K562 (cell line): ENCODE measurements at regions of chr20 and their contacts with region 1.

Region 1: DNA sequence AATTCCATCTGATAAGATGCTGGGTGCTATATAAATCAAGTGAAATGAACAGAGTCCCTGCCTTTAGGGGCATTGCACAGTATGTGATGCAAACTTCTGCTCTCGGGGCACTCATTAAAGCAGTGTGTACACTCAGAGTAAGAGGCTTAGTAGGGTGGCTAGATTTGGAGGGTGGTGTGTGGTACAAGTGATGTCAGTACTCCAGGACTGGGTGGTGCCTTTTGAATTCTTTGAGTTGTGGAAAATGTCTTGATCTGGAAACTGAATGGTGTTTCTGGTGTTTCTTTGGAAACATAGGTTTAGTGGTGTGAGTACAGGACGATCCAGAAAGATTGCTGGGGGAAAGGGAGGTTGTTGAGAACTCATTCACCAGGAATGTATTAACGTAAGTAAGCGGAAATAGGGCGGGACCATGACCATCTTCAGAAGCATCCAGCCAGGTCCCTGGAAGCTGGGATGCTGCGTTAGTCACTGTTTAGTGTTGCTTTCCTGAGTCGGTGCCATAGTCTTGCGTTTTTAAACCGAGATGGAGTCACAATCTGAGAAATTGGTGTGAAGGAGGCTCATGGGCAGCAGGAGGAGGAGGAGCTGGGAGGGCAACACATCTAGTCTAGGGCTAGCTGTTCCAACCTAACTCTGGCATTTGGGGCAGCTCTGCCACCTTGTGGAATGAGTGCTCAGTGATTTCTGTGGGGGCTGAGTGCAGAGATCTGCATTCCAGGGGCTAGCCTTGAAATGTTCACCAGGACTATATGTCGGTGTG is 70.3 kb downstream of the SCAND1 start:
- DNase-seq: peak in 3 of 4 experiments; percentile 31 to 64 (median 62)
- ATAC-seq: peak; percentile 94
- H3K4me3 ChIP-seq: no peak overlapping the region
- H3K27ac ChIP-seq: no peak overlapping the region
- H3K4me1 ChIP-seq: peaks cover 2 to 7% of the 10 kb centered on the region in 2 experiments; a peak in 4 of 5 replicates
- H3K27me3 ChIP-seq: no peaks in the 10 kb centered on the region
- CTCF ChIP-seq: peak; percentile 63 to 78 (median 72)
- EP300 ChIP-seq: no peak
- POLR2A ChIP-seq: no peak
- RAD21 ChIP-seq: peak; percentile 68 to 86

Region 2: GRCh38 chr20:35463455-35464300 is 420.3 kb before region 1 on chr20:
- CTCF ChIA-PET with region 1: no interaction called
- POLR2A ChIA-PET with region 1: no interaction called
- in situ Hi-C with region 1: no loop called
- intact Hi-C with region 1: loop called (anchors 10 kb)
- DNase-seq: peak; percentile 42 to 82 (median 56)
- ATAC-seq: peak; percentile 85
- H3K4me3 ChIP-seq: no peak overlapping the region
- H3K27ac ChIP-seq: 0 out of 3 replicates have a peak overlapping the region, but pooled peaks have one; percentile 8
- H3K4me1 ChIP-seq: peaks cover 19 to 20% of the 10 kb centered on the region in 2 experiments
- H3K27me3 ChIP-seq: no peaks in the 10 kb centered on the region
- CTCF ChIP-seq: peak; percentile 60 to 89 (median 78)
- EP300 ChIP-seq: no peak
- POLR2A ChIP-seq: no peak
- RAD21 ChIP-seq: peak; percentile 57 to 64